Activated CD4-positive, alpha-beta T cell treated with anti-CD3 and anti-CD28 coated beads for 36 hours (primary cell): ENCODE measurements at regions of chr14 and their contacts with region 1.

Region 1: DNA sequence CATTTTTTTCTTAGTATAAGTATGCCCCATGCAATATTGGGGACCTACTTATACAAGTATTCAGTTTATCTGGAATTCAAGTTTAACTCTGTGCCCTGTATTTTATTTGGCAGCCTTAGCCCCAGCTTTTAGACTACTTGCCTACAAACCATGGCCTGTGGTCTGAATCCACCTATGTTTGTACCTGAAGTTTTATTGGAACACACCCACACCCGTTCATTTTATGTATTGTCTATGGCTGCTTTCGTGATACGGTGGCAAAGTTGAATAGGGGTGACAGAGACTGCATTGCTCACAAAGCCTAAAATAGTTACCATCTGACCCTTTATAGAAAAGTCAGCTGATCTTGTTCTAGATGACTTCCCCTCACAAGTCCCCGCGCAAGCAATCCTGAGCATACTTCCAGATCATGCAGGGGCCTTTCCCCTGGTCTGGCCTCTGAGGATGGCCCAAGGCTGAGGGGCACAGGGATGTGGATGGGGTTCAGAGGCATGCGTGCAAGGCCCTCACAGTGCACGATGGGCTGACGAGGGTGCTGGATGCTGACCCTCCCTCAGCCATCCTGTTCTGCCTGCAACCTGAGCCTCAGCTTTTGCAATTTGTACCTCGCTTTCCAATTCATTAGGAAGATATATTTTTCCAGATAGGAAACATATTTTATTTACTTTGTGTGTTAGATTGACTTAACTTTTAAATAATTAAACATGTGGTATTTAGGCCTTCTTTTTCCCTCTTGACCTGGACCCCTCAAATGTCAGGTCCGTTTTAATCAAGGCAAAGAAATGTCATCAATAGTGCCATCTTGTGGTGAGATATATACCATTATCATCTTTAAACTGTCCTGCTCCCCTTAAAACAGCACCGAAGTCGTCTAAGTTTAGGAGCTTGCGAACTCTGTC is 527.3 kb upstream of the CCDC196 start:
- DNase-seq: no peak
- ATAC-seq: no peak
- H3K4me3 Mint-ChIP-seq: no peak overlapping the region
- H3K27ac Mint-ChIP-seq: no peak overlapping the region
- H3K4me1 Mint-ChIP-seq: peaks cover 21% of the 10 kb centered on the region
- H3K27me3 Mint-ChIP-seq: no peaks in the 10 kb centered on the region

Region 2: GRCh38 chr14:65164068-65164824 is 794.7 kb before region 1 on chr14:
- CTCF ChIA-PET with region 1: interaction called, 14 read pairs
- POLR2A ChIA-PET with region 1: no interaction called
- intact Hi-C with region 1: loop called (anchors 1 kb)
- DNase-seq: peak; percentile 56
- ATAC-seq: peak; percentile 60
- H3K4me3 Mint-ChIP-seq: no peak overlapping the region
- H3K27ac Mint-ChIP-seq: no peak overlapping the region
- H3K4me1 Mint-ChIP-seq: peaks cover 14% of the 10 kb centered on the region
- H3K27me3 Mint-ChIP-seq: no peaks in the 10 kb centered on the region

Region 3: DNA sequence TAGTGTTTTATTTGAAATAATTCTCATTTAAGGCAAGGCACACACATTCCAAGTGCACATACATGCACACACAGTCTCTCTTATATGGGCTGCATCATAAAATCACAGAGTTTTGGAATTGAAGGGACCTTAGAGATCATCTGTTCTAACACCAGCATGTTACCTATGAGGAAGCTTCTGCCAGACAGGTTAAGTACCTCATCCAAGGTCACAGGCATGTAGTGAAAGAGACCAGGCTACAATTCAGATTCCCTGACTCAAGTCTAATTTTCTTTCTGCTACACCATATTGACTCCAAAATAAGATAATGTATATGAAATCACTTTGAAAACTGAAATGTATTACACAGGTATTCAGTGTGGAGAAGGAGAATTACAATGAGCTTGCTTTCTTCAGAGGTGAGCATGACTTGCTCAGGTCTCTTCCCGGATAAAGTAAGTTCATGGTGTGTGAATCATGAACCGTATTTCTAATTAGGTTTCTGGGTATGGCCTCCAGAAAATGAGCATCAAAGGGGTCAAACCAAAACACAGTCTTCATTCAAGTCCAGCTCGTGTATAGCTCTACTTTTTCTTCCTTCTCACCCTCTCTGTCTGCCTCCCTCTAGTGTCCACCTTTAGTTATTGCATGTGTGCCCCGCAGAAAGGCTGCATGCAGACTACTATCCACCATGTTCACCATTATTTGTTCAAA is 134.5 kb before region 1 on chr14:
- CTCF ChIA-PET with region 1: interaction called, 23 read pairs
- POLR2A ChIA-PET with region 1: no interaction called
- intact Hi-C with region 1: loop called in 1 of 2 experiments (anchors 1 kb)
- DNase-seq: peak; percentile 70
- ATAC-seq: peak; percentile 80
- H3K4me3 Mint-ChIP-seq: no peak overlapping the region
- H3K27ac Mint-ChIP-seq: no peak overlapping the region
- H3K4me1 Mint-ChIP-seq: peaks cover 7% of the 10 kb centered on the region
- H3K27me3 Mint-ChIP-seq: no peaks in the 10 kb centered on the region

Region 4: GRCh38 chr14:65940056-65940733 is 18.7 kb before region 1 on chr14:
- CTCF ChIA-PET with region 1: interaction called, 38 read pairs
- POLR2A ChIA-PET with region 1: no interaction called
- intact Hi-C with region 1: no loop called
- DNase-seq: peak; percentile 53
- ATAC-seq: peak; percentile 61
- H3K4me3 Mint-ChIP-seq: no peak overlapping the region
- H3K27ac Mint-ChIP-seq: no peak overlapping the region
- H3K4me1 Mint-ChIP-seq: peaks cover 28% of the 10 kb centered on the region
- H3K27me3 Mint-ChIP-seq: no peaks in the 10 kb centered on the region

Region 5: GRCh38 chr14:66070509-66071319 is 111.8 kb after region 1 on chr14:
- CTCF ChIA-PET with region 1: interaction called, 54 read pairs
- POLR2A ChIA-PET with region 1: no interaction called
- intact Hi-C with region 1: loop called (anchors 1 to 2 kb)
- DNase-seq: peak; percentile 79
- ATAC-seq: peak; percentile 63
- H3K4me3 Mint-ChIP-seq: no peak overlapping the region
- H3K27ac Mint-ChIP-seq: no peak overlapping the region
- H3K4me1 Mint-ChIP-seq: no peaks in the 10 kb centered on the region
- H3K27me3 Mint-ChIP-seq: no peaks in the 10 kb centered on the region